Sigmoid colon (tissue), 7 donors: ENCODE measurements at regions of chr18 and their contacts with region 1.

Region 1: DNA sequence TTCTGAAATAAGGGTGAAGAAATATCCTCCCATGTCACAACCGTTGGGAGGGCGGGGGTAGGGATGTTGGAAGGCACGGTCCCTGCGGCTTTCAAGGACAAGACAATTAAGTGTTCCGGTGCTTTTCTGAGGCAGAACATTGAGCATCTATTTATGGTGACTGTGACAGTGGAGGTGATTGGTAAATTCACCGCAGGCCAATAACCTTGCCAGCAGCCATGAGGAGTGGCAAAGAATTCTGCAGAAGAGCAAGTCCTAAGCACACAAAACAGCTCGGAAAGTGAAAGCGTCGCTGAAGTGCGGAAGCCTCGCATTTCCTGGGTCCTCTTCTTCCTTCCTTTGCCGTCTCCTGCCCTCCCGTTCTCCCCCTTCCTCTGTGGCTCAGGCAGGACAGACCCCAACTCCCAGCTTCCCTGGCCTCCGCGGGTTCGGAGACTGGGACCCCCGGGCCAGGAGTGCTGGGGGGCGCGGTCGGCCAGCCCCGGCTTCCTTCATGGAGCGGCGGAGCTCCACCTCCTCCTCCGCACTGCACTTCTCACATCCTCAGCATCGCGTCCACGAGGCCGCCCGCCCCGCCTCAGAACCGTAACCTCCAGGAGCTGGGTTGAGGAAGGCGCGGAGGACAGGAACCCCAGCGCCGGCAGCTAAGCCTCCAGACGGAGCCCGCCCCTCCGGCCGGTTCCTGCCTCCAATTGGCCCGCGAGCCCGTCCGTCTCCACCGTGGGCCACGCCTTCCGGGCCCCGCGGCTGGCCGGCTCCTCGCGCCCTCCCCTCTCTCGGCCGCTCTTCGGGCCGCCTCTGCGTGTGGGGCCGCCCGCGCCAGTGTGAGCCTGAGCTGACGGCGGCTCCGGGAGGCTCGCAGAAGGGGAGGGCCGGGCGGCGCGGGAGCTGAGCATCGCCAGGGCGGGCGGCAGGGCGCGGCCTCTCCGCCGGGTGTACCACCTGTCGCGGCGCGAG is at the start of gene ME2:
- DNase-seq: peak; percentile 96
- H3K4me3 ChIP-seq: peak within 1 kb of the TSS; percentile 81 to 90 (median 83)
- H3K27ac ChIP-seq: peak within 1 kb of the TSS; percentile 95 to 98 (median 96)
- H3K4me1 ChIP-seq: peaks cover 0 to 20% (median 11%) of the 10 kb centered on the region in 4 donors
- H3K27me3 ChIP-seq: no peaks in the 10 kb centered on the region
- CTCF ChIP-seq: no peak
- EP300 ChIP-seq: no peak
- POLR2A ChIP-seq: peak; percentile 50 to 62
- total RNA-seq, gene ME2: 49.6 to 66.2 (median 62.6) TPM

Region 2: DNA sequence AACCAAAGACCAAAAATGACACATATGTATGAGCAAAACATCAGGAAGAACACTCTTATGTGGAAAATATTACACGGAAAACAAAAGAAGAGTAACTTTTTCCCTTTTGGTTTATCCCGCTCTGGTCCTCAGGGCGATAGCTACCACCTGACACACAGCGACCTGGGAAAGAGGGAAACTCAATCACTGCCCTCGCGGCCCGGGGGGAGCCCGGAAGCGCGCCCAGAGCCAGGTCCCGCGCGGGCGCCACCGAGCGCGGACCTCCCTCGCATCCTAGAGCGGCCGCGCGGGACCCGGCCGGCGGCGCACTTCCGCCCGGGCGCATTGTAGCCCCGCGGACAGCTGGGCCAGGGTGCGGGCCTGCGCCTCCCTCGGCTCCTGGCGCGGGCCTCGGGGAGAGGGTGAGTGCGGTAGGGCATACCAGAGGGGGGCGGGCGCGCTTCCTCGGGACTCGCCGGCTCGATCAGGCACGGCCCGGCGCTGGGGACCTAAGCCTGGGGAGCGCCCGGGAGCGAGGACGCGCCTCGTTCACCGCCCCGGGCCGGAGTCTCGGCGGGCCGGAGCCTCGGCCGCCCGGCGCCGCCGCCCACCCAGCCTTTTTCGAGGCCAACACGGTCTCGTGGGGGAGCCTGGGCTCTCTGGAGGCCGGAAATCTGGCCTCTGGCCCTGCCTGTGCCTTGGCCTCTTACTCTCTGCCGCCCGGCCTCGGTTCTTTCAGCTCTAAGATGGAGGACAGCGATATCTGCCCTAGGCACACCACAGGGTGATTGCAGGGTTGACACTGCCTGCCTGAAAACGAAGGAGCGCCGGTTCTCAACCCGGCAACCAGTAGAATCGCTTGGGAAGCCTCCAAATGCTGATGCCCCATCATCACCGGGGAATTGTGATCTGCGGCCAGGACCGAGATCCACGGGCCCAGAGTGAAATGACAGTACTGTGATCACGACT is 89.4 kb after region 1 on chr18 and contains the start of gene ELAC1:
- intact Hi-C with region 1: loop called (anchors 1 kb)
- DNase-seq: peak; percentile 89
- H3K4me3 ChIP-seq: peak within 1 kb of the TSS; percentile 73 to 99 (median 84)
- H3K27ac ChIP-seq: peak within 1 kb of the TSS; percentile 97 to 100 (median 99)
- H3K4me1 ChIP-seq: peaks cover 0 to 24% (median 17%) of the 10 kb centered on the region in 4 donors
- H3K27me3 ChIP-seq: no peaks in the 10 kb centered on the region
- CTCF ChIP-seq: no peak
- EP300 ChIP-seq: no peak
- POLR2A ChIP-seq: peak in 1 of 2 donors; percentile 57
- total RNA-seq, gene ELAC1: 3.9 to 5.8 (median 5.5) TPM